ENCODE measurements at regions of chr16 and their contacts with region 1.

Region 1: GRCh38 chr16:53282975-53283946 is 151.0 kb upstream of the RBL2 start:
- DNase-seq: peak; percentile 33
- H3K4me3 Mint-ChIP-seq: no peak overlapping the region
- H3K27ac Mint-ChIP-seq: no peak overlapping the region
- H3K4me1 Mint-ChIP-seq: no peaks in the 10 kb centered on the region
- H3K27me3 Mint-ChIP-seq: no peaks in the 10 kb centered on the region
- CTCF ChIP-seq: peak; percentile 62

Region 2: DNA sequence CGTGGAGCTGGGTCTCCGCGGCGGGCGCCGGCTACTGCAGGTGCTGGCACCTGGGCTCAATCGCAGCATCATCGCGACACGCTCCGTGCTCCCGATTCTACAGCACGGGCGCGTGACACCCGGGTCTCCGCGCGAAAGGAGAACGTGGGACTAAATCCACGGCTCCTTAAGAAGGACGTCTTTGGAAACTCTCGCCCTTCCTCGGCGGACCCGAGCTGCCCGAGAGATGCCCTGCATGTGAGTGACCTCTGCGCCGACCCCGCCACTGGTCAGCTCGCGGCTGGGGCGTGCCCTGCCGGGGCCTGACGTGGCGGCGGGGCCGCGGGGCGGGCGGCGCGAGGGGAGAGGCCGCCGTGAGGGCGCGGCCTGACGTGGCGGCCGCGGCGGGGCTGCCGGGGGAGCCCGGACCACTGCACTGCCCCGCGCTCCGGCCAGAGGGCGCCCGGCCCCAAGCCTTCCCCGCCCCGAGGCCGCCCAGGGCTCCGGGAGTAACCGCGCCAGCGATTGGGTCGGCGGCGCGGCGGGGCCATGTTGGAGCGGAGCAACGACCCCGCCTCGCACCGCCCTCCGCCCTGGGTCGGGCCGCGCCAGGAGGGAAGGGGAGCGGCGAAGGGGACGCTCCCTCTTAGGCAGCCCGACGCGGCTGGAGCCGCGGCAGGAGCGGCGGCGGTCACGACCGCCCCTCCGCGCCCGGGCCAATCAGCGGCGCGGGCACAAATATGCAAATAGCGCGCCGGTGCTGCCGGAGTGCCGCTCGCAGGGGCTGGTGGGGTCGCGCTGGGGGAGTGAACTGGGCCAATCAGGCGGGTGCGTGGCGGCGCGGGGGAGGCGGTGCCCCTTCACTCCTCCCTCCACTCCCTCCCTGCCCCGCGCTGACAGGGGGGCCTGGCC is 152.9 kb before region 1 on chr16:
- CTCF ChIA-PET with region 1: no interaction called
- intact Hi-C with region 1: loop called (anchors 10 kb)
- DNase-seq: peak; percentile 98
- H3K4me3 Mint-ChIP-seq: peak overlapping the region; percentile 100
- H3K27ac Mint-ChIP-seq: peak overlapping the region; percentile 85
- H3K4me1 Mint-ChIP-seq: peaks cover 32% of the 10 kb centered on the region
- H3K27me3 Mint-ChIP-seq: no peaks in the 10 kb centered on the region
- CTCF ChIP-seq: peak; percentile 34

Measured in Calu3 (cell line).